ENCODE measurements at regions of chr17 and their contacts with region 1.

Region 1: DNA sequence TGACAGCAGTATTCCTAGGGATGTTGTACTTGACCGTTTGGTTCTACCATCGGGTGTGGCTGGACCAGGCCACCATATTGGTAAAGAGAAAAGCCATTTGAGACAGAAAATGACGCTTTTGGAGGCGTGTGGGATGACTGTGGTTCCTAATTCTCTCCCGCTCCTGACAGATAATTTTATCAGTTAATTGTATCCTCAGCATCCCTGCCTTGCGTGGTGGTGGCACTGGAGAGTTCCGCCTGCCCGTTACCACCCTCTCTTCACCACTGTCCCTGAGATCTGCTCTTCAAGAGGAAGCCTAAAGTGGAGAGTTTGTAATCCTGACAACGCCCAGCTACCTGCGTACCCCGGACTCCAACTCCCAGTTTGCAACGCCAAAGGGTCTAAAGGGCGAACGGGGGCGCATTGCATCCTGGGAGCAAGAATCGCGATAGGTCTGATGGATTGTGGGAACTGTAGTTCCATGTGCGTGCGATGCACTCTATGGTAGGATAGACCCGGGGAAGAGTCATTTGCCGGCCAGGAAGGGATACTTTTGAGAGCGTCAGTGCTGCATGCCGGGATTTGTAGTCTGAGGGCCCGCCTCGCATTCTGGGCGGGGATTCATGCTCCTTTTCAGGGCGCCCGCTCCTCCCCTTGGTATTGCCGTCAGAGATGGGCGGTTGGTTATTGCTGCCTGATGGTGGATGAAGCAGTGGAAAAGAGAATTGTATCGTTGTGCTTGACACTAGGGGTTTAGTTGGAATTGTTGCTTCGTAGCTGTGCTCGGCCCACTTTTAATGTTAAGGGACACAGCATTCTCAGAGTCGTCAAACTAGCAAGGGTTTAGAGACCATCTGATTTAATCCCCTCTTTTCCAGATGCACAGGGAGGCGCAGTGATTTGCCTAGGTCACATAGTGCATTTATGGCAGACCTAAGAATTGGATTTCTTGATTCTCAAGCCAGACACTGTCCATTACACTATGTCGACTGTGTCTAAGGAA is 965 bp upstream of the PHF12 start:
- DNase-seq: peak; percentile 96
- H3K4me3 Mint-ChIP-seq: no peak overlapping the region
- H3K27ac Mint-ChIP-seq: no peak overlapping the region
- H3K4me1 Mint-ChIP-seq: peaks cover 15% of the 10 kb centered on the region
- H3K27me3 Mint-ChIP-seq: no peaks in the 10 kb centered on the region

Region 2: GRCh38 chr17:28598799-28599310 is 353.4 kb before region 1 on chr17 and contains the start of gene SPAG5:
- intact Hi-C with region 1: loop called (anchors 5 kb)
- DNase-seq: peak; percentile 96
- H3K4me3 Mint-ChIP-seq: peak within 1 kb of the TSS; percentile 96
- H3K27ac Mint-ChIP-seq: peak within 1 kb of the TSS; percentile 98
- H3K4me1 Mint-ChIP-seq: peaks cover 26% of the 10 kb centered on the region
- H3K27me3 Mint-ChIP-seq: no peaks in the 10 kb centered on the region
- total RNA-seq, gene SPAG5: 81.9 and 83.1 TPM in 2 replicates

Region 3: GRCh38 chr17:28717578-28718333 is 234.5 kb before region 1 on chr17 and contains the start of gene RAB34:
- intact Hi-C with region 1: loop called (anchors 1 kb)
- DNase-seq: no peak
- H3K4me3 Mint-ChIP-seq: peak within 1 kb of the TSS; percentile 65
- H3K27ac Mint-ChIP-seq: peak within 1 kb of the TSS; percentile 73
- H3K4me1 Mint-ChIP-seq: peaks cover 35% of the 10 kb centered on the region
- H3K27me3 Mint-ChIP-seq: peaks cover 23% of the 10 kb centered on the region
- total RNA-seq, gene RAB34: 17.6 and 18.2 TPM in 2 replicates

Region 4: DNA sequence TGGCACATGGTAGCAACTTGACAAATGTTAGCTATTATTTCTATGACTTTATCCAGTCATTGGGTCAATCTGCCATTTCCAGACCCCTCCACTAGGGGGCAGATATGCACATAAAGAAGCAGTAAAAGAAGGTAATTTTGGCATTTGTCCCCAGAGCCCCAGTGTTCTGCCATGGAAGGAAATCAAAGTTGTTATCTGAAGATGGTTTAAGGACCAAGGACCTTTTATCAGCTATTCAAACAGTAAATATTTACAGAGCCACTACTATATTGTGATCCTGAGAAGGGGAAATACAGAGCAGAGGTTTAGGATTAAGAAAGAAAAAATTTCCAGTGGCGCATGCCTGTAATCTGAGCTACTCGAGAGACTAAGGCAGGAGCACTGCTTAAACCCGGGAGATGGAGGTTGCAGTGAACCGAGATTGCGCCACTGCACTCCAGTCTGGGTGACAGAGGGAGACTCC is 188.4 kb before region 1 on chr17:
- intact Hi-C with region 1: loop called (anchors 2 kb)
- DNase-seq: peak; percentile 63
- H3K4me3 Mint-ChIP-seq: no peak overlapping the region
- H3K27ac Mint-ChIP-seq: peak overlapping the region; percentile 53
- H3K4me1 Mint-ChIP-seq: peaks cover 26% of the 10 kb centered on the region
- H3K27me3 Mint-ChIP-seq: no peaks in the 10 kb centered on the region

Region 5: GRCh38 chr17:28854457-28855350 is 97.6 kb before region 1 on chr17 and contains the start of gene ERAL1:
- intact Hi-C with region 1: loop called (anchors 1 kb)
- DNase-seq: peak; percentile 82
- H3K4me3 Mint-ChIP-seq: peak within 1 kb of the TSS; percentile 85
- H3K27ac Mint-ChIP-seq: peak within 1 kb of the TSS; percentile 88
- H3K4me1 Mint-ChIP-seq: peaks cover 14% of the 10 kb centered on the region
- H3K27me3 Mint-ChIP-seq: no peaks in the 10 kb centered on the region
- total RNA-seq, gene ERAL1: 60.4 and 61.5 TPM in 2 replicates

Region 6: DNA sequence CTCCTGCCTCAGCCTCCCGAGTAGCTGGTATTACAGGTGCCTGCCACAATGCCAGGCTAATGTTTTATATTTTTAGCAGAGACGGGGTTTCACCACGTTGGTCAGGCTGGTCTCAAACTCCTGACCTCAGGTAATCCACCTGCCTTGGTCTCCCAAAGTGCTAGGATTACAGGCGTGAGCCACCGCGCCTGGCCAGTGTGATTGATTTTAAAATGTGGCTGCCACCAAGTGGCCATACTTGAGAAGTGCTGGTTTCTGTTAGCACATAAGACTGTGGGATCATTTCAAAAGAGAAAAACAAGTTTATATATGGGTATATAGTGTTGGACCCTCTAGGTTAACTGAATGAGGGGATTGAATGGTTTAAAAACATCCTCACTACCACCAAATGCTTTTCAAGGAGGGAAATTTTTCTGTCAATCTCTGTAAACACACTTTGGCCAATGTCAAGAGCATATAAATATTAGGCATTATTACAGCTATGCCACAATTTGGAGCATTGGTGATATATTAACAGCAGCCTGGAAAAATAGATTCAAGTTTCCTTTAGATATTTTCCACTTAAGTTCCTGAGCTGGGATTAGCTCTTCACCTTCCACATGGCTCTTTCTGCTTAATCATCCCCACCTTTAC is 35.9 kb before region 1 on chr17:
- intact Hi-C with region 1: no loop called
- DNase-seq: no peak
- H3K4me3 Mint-ChIP-seq: no peak overlapping the region
- H3K27ac Mint-ChIP-seq: peak overlapping the region; percentile 47
- H3K4me1 Mint-ChIP-seq: peaks cover 18% of the 10 kb centered on the region
- H3K27me3 Mint-ChIP-seq: no peaks in the 10 kb centered on the region

Region 7: GRCh38 chr17:29140051-29140621 is 187.9 kb after region 1 on chr17:
- intact Hi-C with region 1: loop called (anchors 1 kb)
- DNase-seq: peak; percentile 82
- H3K4me3 Mint-ChIP-seq: peak overlapping the region; percentile 96
- H3K27ac Mint-ChIP-seq: peak overlapping the region; percentile 100
- H3K4me1 Mint-ChIP-seq: peaks cover 80% of the 10 kb centered on the region
- H3K27me3 Mint-ChIP-seq: no peaks in the 10 kb centered on the region

Region 8: DNA sequence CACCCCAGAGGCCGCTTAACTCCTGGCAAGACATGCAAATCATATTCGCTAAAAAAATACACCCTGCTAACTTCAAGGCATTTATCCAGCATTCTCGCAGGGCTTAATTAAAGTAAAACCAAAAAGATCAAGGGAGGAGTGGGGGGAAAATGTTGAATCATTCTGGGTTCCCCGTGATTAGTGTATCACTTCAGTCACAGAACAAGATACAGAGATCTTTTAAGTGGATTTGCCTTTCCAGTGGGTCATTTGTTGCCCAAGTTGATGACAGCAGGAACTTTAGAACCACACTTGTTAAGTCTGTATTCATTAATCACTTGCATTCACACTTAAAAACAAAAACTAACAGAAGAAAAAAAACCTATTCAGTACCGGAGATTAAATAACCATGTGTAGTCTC is 311.6 kb after region 1 on chr17:
- intact Hi-C with region 1: no loop called
- DNase-seq: no peak
- H3K4me3 Mint-ChIP-seq: no peak overlapping the region
- H3K27ac Mint-ChIP-seq: peak overlapping the region; percentile 20
- H3K4me1 Mint-ChIP-seq: peaks cover 16% of the 10 kb centered on the region
- H3K27me3 Mint-ChIP-seq: no peaks in the 10 kb centered on the region

Measured in activated T-helper 1 cell treated with anti-CD3 and anti-CD28 coated beads, Interleukin-12 subunit alpha, Interleukin-12 subunit beta, Interleukin-2, Interleukin-4 antibody, amounts not matched to agents 30 ng/mL and 10 ng/mL and 1 ng/mL, durations not matched to agents 14 hours and 24 hours and 36 hours (primary cell).